ENCODE measurements at regions of chr21 and their contacts with region 1.

Region 1: DNA sequence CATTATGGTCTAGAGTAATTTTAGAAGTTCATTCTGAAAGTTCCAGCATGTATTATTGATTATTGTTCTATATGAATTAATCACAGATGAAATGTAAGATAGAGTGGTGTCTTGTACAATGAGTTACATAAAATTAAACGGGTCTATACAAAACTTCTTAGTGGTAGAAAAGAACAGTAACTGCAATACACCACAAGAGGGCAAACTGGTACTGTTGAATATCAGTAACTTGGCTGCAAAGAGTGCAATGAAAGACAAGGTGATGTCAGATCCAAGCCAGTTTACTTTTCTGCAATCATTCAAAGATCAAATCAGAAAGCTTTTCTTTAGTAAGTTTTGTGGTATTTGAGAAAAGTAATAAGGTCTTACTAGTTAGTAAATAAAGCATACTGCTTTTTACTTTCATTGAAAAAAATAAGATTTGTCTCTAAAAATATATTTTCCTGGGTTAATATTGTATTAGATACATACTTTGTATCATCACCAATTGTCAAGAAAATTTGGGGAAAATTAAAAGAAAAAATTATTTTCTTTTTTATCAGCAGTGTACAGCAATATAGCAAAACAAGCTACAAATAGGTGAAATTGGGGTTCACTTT is 66.4 kb upstream of the BTG3 start:
- DNase-seq: peak in 1 of 2 donors; percentile 82
- ATAC-seq: peak; percentile 90 to 98 (median 96)
- H3K4me3 ChIP-seq: no peak overlapping the region
- H3K4me3 Mint-ChIP-seq: no peak overlapping the region
- H3K27ac ChIP-seq: no peak overlapping the region
- H3K27ac Mint-ChIP-seq: no peak overlapping the region
- H3K4me1 ChIP-seq: no peaks in the 10 kb centered on the region
- H3K4me1 Mint-ChIP-seq: no peaks in the 10 kb centered on the region
- H3K27me3 ChIP-seq: no peaks in the 10 kb centered on the region
- H3K27me3 Mint-ChIP-seq: no peaks in the 10 kb centered on the region
- CTCF ChIP-seq: peak; percentile 89

Region 2: DNA sequence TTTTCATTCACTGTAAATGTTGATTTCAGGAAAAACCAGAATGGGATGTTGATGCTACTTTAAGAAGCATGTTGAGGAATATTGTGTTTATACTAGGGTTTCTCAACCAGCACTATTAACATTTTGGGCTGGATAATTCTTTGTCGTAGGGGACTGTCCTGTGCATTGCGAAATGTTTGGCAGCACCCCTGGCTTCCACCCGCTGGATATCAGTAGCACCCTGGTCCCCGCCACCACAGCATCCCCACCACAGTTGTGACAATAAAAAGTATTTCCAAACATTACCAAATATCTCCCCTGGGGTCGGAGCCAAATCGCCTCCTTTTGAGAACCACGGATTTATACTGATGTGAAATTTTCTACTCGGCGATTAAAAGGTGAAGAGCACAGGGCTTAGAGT is 108.3 kb before region 1 on chr21:
- intact Hi-C with region 1: no loop called
- DNase-seq: no peak
- ATAC-seq: no peak
- H3K4me3 ChIP-seq: no peak overlapping the region
- H3K4me3 Mint-ChIP-seq: no peak overlapping the region
- H3K27ac ChIP-seq: no peak overlapping the region
- H3K27ac Mint-ChIP-seq: no peak overlapping the region
- H3K4me1 ChIP-seq: no peaks in the 10 kb centered on the region
- H3K4me1 Mint-ChIP-seq: no peaks in the 10 kb centered on the region
- H3K27me3 ChIP-seq: peaks cover 2% of the 10 kb centered on the region
- H3K27me3 Mint-ChIP-seq: peaks cover 0 to 5% of the 10 kb centered on the region in 2 donors
- CTCF ChIP-seq: no peak

Region 3: GRCh38 chr21:17636711-17637110 is 42.4 kb before region 1 on chr21:
- intact Hi-C with region 1: no loop called
- DNase-seq: no peak
- ATAC-seq: no peak
- H3K4me3 ChIP-seq: no peak overlapping the region
- H3K4me3 Mint-ChIP-seq: no peak overlapping the region
- H3K27ac ChIP-seq: no peak overlapping the region
- H3K27ac Mint-ChIP-seq: no peak overlapping the region
- H3K4me1 ChIP-seq: no peaks in the 10 kb centered on the region
- H3K4me1 Mint-ChIP-seq: peaks cover 0 to 8% of the 10 kb centered on the region in 2 donors
- H3K27me3 ChIP-seq: no peaks in the 10 kb centered on the region
- H3K27me3 Mint-ChIP-seq: no peaks in the 10 kb centered on the region
- CTCF ChIP-seq: no peak

Region 4: GRCh38 chr21:17699524-17700189 is 20.6 kb after region 1 on chr21:
- intact Hi-C with region 1: no loop called
- DNase-seq: no peak
- ATAC-seq: no peak
- H3K4me3 ChIP-seq: no peak overlapping the region
- H3K4me3 Mint-ChIP-seq: no peak overlapping the region
- H3K27ac ChIP-seq: no peak overlapping the region
- H3K27ac Mint-ChIP-seq: no peak overlapping the region
- H3K4me1 ChIP-seq: no peaks in the 10 kb centered on the region
- H3K4me1 Mint-ChIP-seq: no peaks in the 10 kb centered on the region
- H3K27me3 ChIP-seq: no peaks in the 10 kb centered on the region
- H3K27me3 Mint-ChIP-seq: peaks cover 0 to 5% of the 10 kb centered on the region in 2 donors
- CTCF ChIP-seq: no peak

Region 5: GRCh38 chr21:17780539-17780938 is 101.4 kb after region 1 on chr21:
- intact Hi-C with region 1: no loop called
- DNase-seq: peak in 1 of 2 donors; percentile 86
- ATAC-seq: peak; percentile 53 to 75 (median 71)
- H3K4me3 ChIP-seq: no peak overlapping the region
- H3K4me3 Mint-ChIP-seq: peak overlapping the region; percentile 49
- H3K27ac ChIP-seq: peak overlapping the region; percentile 59
- H3K27ac Mint-ChIP-seq: peak overlapping the region; percentile 91 to 92
- H3K4me1 ChIP-seq: peaks cover 47% of the 10 kb centered on the region
- H3K4me1 Mint-ChIP-seq: peaks cover 77 to 78% of the 10 kb centered on the region in 2 donors
- H3K27me3 ChIP-seq: no peaks in the 10 kb centered on the region
- H3K27me3 Mint-ChIP-seq: no peaks in the 10 kb centered on the region
- CTCF ChIP-seq: no peak

Region 6: GRCh38 chr21:17903029-17903806 is 224.1 kb after region 1 on chr21:
- intact Hi-C with region 1: loop called (anchors 1 kb)
- DNase-seq: peak in 1 of 2 donors; percentile 70
- ATAC-seq: peak; percentile 54 to 68 (median 68)
- H3K4me3 ChIP-seq: no peak overlapping the region
- H3K4me3 Mint-ChIP-seq: no peak overlapping the region
- H3K27ac ChIP-seq: no peak overlapping the region
- H3K27ac Mint-ChIP-seq: no peak overlapping the region
- H3K4me1 ChIP-seq: no peaks in the 10 kb centered on the region
- H3K4me1 Mint-ChIP-seq: peaks cover 0 to 4% of the 10 kb centered on the region in 2 donors
- H3K27me3 ChIP-seq: no peaks in the 10 kb centered on the region
- H3K27me3 Mint-ChIP-seq: peaks cover 0 to 2% of the 10 kb centered on the region in 2 donors
- CTCF ChIP-seq: peak; percentile 65

Region 7: GRCh38 chr21:17925000-17925610 is 246.0 kb after region 1 on chr21:
- intact Hi-C with region 1: loop called (anchors 1 kb)
- DNase-seq: peak in 1 of 2 donors; percentile 79
- ATAC-seq: peak; percentile 89 to 98 (median 95)
- H3K4me3 ChIP-seq: no peak overlapping the region
- H3K4me3 Mint-ChIP-seq: no peak overlapping the region
- H3K27ac ChIP-seq: no peak overlapping the region
- H3K27ac Mint-ChIP-seq: no peak overlapping the region
- H3K4me1 ChIP-seq: no peaks in the 10 kb centered on the region
- H3K4me1 Mint-ChIP-seq: peaks cover 7% of the 10 kb centered on the region in 2 donors
- H3K27me3 ChIP-seq: no peaks in the 10 kb centered on the region
- H3K27me3 Mint-ChIP-seq: peaks cover 8 to 10% of the 10 kb centered on the region in 2 donors
- CTCF ChIP-seq: peak; percentile 80